ENCODE measurements at regions of chrX and their contacts with region 1.

Region 1: GRCh38 chrX:11381464-11381863 is 88.3 kb downstream of the AMELX start:
- DNase-seq: peak; percentile 18
- H3K4me3 ChIP-seq: no peak overlapping the region
- H3K27ac ChIP-seq: no peak overlapping the region
- H3K27me3 ChIP-seq: no peaks in the 10 kb centered on the region
- CTCF ChIP-seq: peak; percentile 55

Region 2: GRCh38 chrX:9475984-9476383 is 1905.5 kb before region 1 on chrX:
- CTCF ChIA-PET with region 1: no interaction called
- POLR2A ChIA-PET with region 1: no interaction called
- DNase-seq: no peak
- H3K4me3 ChIP-seq: no peak overlapping the region
- H3K27ac ChIP-seq: no peak overlapping the region
- H3K27me3 ChIP-seq: no peaks in the 10 kb centered on the region
- CTCF ChIP-seq: no peak

Region 3: DNA sequence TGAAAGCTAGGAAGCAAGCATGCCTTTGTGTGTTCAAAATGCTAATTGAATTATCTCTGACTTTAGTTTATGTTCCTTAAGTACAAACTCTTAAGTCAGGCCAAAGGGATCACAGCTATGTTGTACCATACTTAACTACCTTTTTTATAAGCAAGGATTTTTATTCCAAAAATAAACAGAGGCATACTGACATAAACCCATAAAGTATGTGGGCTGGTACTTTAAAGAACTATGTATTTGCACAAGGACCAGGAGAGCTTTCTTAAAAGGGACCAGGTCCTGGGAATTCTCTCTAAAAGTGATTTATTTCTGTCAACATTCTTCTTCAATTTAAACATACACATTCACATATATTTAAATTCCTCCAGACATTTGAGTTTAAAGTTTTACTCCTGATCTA is 328.1 kb before region 1 on chrX:
- CTCF ChIA-PET with region 1: no interaction called
- POLR2A ChIA-PET with region 1: no interaction called
- DNase-seq: no peak
- H3K4me3 ChIP-seq: no peak overlapping the region
- H3K27ac ChIP-seq: no peak overlapping the region
- H3K27me3 ChIP-seq: no peaks in the 10 kb centered on the region
- CTCF ChIP-seq: no peak

Region 4: GRCh38 chrX:11367609-11368430 is 13.6 kb before region 1 on chrX:
- CTCF ChIA-PET with region 1: interaction called, 27 read pairs
- POLR2A ChIA-PET with region 1: interaction called, 3 read pairs
- DNase-seq: no peak
- H3K4me3 ChIP-seq: no peak overlapping the region
- H3K27ac ChIP-seq: no peak overlapping the region
- H3K27me3 ChIP-seq: no peaks in the 10 kb centered on the region
- CTCF ChIP-seq: no peak

Region 5: DNA sequence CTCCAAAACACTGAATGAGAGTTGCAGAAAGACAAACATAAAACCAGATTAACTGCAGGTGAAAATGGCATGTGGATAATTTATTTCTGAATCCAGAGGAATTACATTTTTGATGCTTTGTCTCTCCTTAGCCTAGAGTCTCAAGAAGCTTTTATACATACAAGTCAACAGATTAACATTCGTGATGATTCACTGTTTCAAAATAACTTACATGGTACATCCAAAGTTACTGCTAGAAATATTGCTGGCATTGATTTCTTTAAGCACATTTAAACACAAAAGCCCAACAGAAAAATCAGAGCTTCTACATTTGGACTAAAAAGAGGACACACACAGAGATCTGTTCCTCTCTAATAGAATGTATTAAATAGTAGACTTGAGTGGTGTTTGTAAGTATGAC is 17.3 kb after region 1 on chrX:
- CTCF ChIA-PET with region 1: interaction called, 12 read pairs
- POLR2A ChIA-PET with region 1: no interaction called
- DNase-seq: no peak
- H3K4me3 ChIP-seq: no peak overlapping the region
- H3K27ac ChIP-seq: no peak overlapping the region
- H3K27me3 ChIP-seq: no peaks in the 10 kb centered on the region
- CTCF ChIP-seq: no peak

Region 6: GRCh38 chrX:11430271-11430670 is 48.8 kb after region 1 on chrX:
- CTCF ChIA-PET with region 1: no interaction called
- POLR2A ChIA-PET with region 1: no interaction called
- DNase-seq: no peak
- H3K4me3 ChIP-seq: no peak overlapping the region
- H3K27ac ChIP-seq: no peak overlapping the region
- H3K27me3 ChIP-seq: no peaks in the 10 kb centered on the region
- CTCF ChIP-seq: no peak